CD4-positive, alpha-beta T cell (primary cell): ENCODE measurements at regions of chr4 and their contacts with region 1.

Region 1: DNA sequence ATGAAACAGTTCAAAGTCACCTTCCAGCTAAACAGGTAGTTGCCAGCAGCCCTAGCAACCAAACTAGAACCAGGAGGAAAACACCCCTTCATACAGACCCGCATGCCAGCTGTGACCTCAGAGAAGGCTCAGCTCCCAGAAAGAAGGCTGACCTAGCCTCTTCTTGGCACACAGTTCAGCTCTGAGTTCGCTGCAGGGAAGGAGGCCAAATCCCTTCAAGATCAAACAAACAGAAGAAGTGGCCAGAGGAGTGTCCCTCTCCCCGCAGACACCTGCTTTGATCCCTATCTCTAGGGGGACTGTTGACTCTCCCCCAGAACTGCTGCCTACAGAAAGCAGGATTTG is 56.0 kb downstream of the HADH start:
- DNase-seq: peak in 2 of 14 experiments; percentile 40 to 41
- ATAC-seq: peak; percentile 21
- H3K4me3 ChIP-seq: no peak overlapping the region
- H3K4me3 Mint-ChIP-seq: no peak overlapping the region
- H3K27ac ChIP-seq: peak overlapping the region; percentile 14 to 49
- H3K27ac Mint-ChIP-seq: peak overlapping the region; percentile 93
- H3K4me1 ChIP-seq: peaks cover 31% of the 10 kb centered on the region
- H3K4me1 Mint-ChIP-seq: peaks cover 69% of the 10 kb centered on the region
- H3K27me3 ChIP-seq: no peaks in the 10 kb centered on the region
- H3K27me3 Mint-ChIP-seq: no peaks in the 10 kb centered on the region
- CTCF ChIP-seq: no peak

Region 2: DNA sequence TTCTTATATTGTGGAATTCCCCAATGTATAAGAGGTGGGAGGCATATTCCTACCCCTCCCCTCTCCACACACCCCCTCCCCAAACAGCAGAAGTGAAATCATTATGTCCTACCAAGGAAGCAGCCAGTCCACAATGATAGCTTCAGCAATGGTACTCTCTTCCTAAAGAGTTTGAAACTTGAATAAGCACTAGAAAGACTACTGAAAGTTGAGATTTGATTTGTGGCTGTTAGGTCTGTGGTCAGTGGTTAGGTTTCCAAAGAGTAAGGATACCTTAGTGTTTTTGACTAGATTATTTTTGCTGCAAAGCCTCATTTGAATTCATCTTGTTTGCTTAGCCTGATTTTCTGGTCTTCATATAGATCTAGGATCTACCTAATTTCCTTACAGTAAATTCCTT is 1251.7 kb before region 1 on chr4:
- CTCF ChIA-PET with region 1: no interaction called
- POLR2A ChIA-PET with region 1: no interaction called
- intact Hi-C with region 1: no loop called
- DNase-seq: no peak
- ATAC-seq: no peak
- H3K4me3 ChIP-seq: no peak overlapping the region
- H3K4me3 Mint-ChIP-seq: no peak overlapping the region
- H3K27ac ChIP-seq: no peak overlapping the region
- H3K27ac Mint-ChIP-seq: no peak overlapping the region
- H3K4me1 ChIP-seq: no peaks in the 10 kb centered on the region
- H3K4me1 Mint-ChIP-seq: no peaks in the 10 kb centered on the region
- H3K27me3 ChIP-seq: no peaks in the 10 kb centered on the region
- H3K27me3 Mint-ChIP-seq: no peaks in the 10 kb centered on the region
- CTCF ChIP-seq: no peak

Region 3: GRCh38 chr4:108060164-108060563 is 14.5 kb after region 1 on chr4:
- CTCF ChIA-PET with region 1: interaction called, 4 read pairs
- POLR2A ChIA-PET with region 1: interaction called, 27 read pairs
- intact Hi-C with region 1: no loop called
- DNase-seq: peak in 3 of 14 experiments; percentile 42 to 48 (median 48)
- ATAC-seq: no peak
- H3K4me3 ChIP-seq: no peak overlapping the region
- H3K4me3 Mint-ChIP-seq: no peak overlapping the region
- H3K27ac ChIP-seq: peak overlapping the region in 1 of 2 donors; percentile 38
- H3K27ac Mint-ChIP-seq: peak overlapping the region; percentile 93
- H3K4me1 ChIP-seq: peaks cover 52% of the 10 kb centered on the region
- H3K4me1 Mint-ChIP-seq: peaks cover 94% of the 10 kb centered on the region
- H3K27me3 ChIP-seq: no peaks in the 10 kb centered on the region
- H3K27me3 Mint-ChIP-seq: no peaks in the 10 kb centered on the region
- CTCF ChIP-seq: peak; percentile 12